ENCODE measurements at regions of chr6 and their contacts with region 1.

Region 1: DNA sequence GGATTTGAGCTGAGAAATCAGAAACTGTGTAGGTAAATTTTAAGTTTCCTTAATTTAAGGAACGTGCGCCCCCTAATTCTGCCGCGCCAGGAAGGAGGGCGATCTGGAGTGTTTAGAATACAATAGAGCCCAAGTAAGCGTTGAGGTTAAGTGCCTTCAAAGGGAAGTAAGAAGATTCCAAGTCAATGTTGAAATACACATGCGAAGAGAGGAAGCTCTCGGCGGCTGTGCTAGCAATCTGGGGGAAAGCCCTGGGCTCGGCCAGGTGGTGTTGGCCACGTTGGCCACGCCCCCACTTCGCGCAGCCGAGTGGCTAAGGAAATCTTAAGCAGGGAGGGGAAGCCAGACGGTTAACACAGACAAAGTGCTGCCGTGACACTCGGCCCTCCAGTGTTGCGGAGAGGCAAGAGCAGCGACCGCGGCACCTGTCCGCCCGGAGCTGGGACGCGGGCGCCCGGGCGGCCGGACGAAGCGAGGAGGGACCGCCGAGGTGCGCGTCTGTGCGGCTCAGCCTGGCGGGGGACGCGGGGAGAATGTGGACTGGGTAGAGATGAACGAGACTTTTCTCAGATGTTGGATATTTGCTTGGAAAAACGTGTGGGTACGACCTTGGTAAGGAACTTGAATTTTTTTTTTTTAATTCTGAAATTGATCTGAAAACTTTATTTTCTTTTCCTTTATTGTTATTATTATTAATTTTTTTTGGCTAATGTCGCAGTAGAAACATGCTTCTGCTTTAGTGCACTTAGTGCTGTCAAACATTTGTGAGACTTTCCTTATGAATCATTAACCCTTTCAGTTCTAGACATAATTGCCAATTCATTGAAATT is at the start of gene PRDM1:
- DNase-seq: peak; percentile 78
- H3K4me3 Mint-ChIP-seq: peak within 1 kb of the TSS; percentile 89
- H3K27ac Mint-ChIP-seq: peak within 1 kb of the TSS; percentile 64
- H3K4me1 Mint-ChIP-seq: peaks cover 76% of the 10 kb centered on the region
- H3K27me3 Mint-ChIP-seq: peaks cover 5% of the 10 kb centered on the region
- total RNA-seq, gene PRDM1: 49.1 and 52.3 TPM in 2 replicates

Region 2: DNA sequence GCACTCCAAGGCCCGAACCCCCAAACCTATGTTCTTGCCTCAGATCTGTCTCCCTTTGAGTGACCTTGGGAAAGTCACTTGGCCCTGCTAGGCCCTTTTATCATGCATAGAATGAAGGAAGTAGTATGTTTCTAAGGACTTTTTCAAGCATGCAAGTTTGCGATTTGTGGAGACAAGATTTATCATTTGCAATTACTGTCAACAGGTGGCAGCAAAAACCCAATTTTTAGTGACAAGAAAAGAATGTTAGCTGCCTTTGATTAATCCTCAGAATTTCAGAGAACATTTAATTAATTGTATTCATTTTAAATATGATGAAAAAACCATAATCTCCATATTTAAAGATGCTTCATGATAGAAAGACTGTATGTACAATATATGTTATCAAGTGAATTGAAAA is 655.0 kb before region 1 on chr6:
- intact Hi-C with region 1: loop called (anchors 5 kb)
- DNase-seq: no peak
- H3K4me3 Mint-ChIP-seq: no peak overlapping the region
- H3K27ac Mint-ChIP-seq: no peak overlapping the region
- H3K4me1 Mint-ChIP-seq: peaks cover 6% of the 10 kb centered on the region
- H3K27me3 Mint-ChIP-seq: peaks cover 26% of the 10 kb centered on the region

Region 3: DNA sequence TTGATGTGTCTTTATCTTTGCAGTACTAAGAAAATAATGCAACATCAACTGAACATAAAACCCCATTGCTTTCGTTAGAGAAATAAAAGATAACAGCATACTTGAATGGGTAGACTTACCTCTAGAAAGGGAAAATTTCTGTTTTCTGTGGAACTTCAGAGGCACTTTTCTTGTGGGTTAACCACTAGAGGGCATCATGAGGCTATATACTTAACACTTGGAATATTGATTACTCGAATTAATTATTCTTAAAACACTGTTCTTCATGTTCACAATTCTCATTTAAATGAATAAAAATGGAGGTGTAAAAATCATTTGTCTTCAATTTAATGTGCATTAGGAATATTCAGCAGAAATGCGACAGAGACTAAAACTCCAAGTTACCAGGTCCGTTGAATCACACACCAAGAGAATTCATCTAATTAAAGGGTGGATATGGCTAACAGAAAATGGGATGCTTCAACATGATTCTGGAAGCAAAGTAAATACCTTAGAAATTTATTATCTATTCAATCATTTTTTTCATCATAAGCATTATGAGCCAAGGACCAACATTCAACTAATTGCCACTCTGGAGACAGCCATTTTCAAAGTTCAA is 352.5 kb before region 1 on chr6:
- intact Hi-C with region 1: loop called (anchors 5 kb)
- DNase-seq: no peak
- H3K4me3 Mint-ChIP-seq: no peak overlapping the region
- H3K27ac Mint-ChIP-seq: no peak overlapping the region
- H3K4me1 Mint-ChIP-seq: peaks cover 21% of the 10 kb centered on the region
- H3K27me3 Mint-ChIP-seq: peaks cover 2% of the 10 kb centered on the region

Region 4: DNA sequence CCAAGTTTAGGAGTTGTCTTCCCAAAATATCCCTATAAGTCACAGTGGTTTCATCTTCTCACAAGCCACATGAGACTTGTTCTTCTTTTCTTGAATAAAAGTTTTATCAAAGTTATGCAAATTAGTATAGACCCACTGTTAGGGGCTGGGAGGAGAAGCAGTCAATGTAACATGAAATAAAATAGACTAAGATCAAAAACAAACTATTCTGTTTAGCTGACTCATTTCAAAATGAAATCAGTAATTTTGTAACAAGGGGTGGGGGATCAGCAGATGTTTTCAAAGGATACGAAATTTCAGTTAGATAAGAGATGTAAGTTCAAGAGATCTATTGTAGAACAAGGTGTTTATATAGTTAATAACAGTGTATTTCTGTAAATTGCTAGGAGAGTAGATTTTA is 339.7 kb before region 1 on chr6:
- intact Hi-C with region 1: loop called (anchors 2 kb)
- DNase-seq: no peak
- H3K4me3 Mint-ChIP-seq: no peak overlapping the region
- H3K27ac Mint-ChIP-seq: peak overlapping the region; percentile 47
- H3K4me1 Mint-ChIP-seq: peaks cover 59% of the 10 kb centered on the region
- H3K27me3 Mint-ChIP-seq: no peaks in the 10 kb centered on the region

Region 5: GRCh38 chr6:105880030-105880492 is 206.1 kb before region 1 on chr6:
- intact Hi-C with region 1: loop called (anchors 5 kb)
- DNase-seq: no peak
- H3K4me3 Mint-ChIP-seq: peak overlapping the region; percentile 43
- H3K27ac Mint-ChIP-seq: peak overlapping the region; percentile 21
- H3K4me1 Mint-ChIP-seq: peaks cover 58% of the 10 kb centered on the region
- H3K27me3 Mint-ChIP-seq: peaks cover 4% of the 10 kb centered on the region

Region 6: GRCh38 chr6:106026748-106027715 is 59.2 kb before region 1 on chr6:
- intact Hi-C with region 1: loop called (anchors 1 kb)
- DNase-seq: no peak
- H3K4me3 Mint-ChIP-seq: peak overlapping the region; percentile 26
- H3K27ac Mint-ChIP-seq: no peak overlapping the region
- H3K4me1 Mint-ChIP-seq: peaks cover 25% of the 10 kb centered on the region
- H3K27me3 Mint-ChIP-seq: peaks cover 12% of the 10 kb centered on the region